CD14-positive monocyte (primary cell): ENCODE measurements at regions of chr1 and their contacts with region 1.

Region 1: DNA sequence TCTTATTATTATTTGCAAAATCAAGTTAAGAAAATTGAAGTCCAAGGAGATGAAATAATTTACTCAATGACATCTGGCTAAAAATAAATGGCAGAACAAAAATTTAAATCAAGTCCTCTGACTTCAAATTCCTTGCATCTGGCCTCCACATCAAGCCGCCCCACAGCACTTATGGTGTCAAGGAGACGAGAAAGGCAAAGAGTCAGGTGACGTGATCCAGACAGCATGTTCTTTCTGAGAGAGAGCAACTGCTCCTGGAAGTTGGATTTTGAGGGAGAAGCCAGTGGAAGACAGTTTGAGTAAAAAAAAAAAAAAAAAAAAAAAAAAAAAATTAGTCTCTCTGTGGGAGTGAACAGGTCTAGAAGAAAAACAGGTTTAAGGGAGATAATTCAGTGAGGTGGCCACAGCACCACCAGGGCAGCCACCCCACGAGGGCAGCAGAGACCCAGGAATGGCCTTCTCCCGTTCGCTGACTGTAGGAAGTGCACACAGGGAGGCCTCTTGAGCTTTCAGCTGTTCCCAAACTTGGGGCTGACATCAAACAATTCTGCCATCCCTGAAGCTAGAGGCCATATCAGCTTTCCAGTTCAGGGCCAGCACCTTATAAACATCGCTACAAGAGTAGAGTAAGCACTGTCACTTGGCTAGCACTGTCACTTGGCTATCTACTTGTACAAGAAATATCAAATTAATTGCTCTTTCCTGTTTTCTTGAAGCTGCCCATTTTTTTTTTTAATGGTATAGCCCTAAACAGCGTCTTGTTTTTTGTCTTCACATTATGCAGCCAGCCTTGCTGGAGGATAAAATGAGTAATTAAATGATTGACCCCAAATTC is 7.8 kb downstream of the C1orf162 start:
- DNase-seq: peak; percentile 71 to 85 (median 77)
- H3K4me3 ChIP-seq: no peak overlapping the region
- H3K4me3 Mint-ChIP-seq: no peak overlapping the region
- H3K27ac ChIP-seq: peak overlapping the region in 1 of 2 donors; percentile 74
- H3K27ac Mint-ChIP-seq: peak overlapping the region in 5 of 7 donors; percentile 38 to 81 (median 46)
- H3K4me1 ChIP-seq: peaks cover 61 to 63% of the 10 kb centered on the region in 2 donors
- H3K4me1 Mint-ChIP-seq: peaks cover 70% of the 10 kb centered on the region
- H3K27me3 ChIP-seq: no peaks in the 10 kb centered on the region
- H3K27me3 Mint-ChIP-seq: no peaks in the 10 kb centered on the region
- CTCF ChIP-seq: peak; percentile 81

Region 2: GRCh38 chr1:111516005-111516535 is 34.5 kb after region 1 on chr1:
- intact Hi-C with region 1: loop called (anchors 5 kb)
- DNase-seq: peak; percentile 69 to 80 (median 80)
- H3K4me3 ChIP-seq: peak overlapping the region; percentile 44 to 85 (median 66)
- H3K4me3 Mint-ChIP-seq: peak overlapping the region; percentile 81 to 95
- H3K27ac ChIP-seq: peak overlapping the region; percentile 68 to 83
- H3K27ac Mint-ChIP-seq: peak overlapping the region; percentile 72 to 92 (median 83)
- H3K4me1 ChIP-seq: peaks cover 23 to 25% of the 10 kb centered on the region in 2 donors
- H3K4me1 Mint-ChIP-seq: peaks cover 29% of the 10 kb centered on the region
- H3K27me3 ChIP-seq: no peaks in the 10 kb centered on the region
- H3K27me3 Mint-ChIP-seq: peaks cover 0 to 5% (median 1%) of the 10 kb centered on the region in 3 donors
- CTCF ChIP-seq: peak; percentile 77

Region 3: GRCh38 chr1:111656086-111657017 is 174.7 kb after region 1 on chr1:
- intact Hi-C with region 1: loop called in 1 of 2 experiments (anchors 10 kb)
- DNase-seq: peak; percentile 5 to 38 (median 37)
- H3K4me3 ChIP-seq: no peak overlapping the region
- H3K4me3 Mint-ChIP-seq: no peak overlapping the region
- H3K27ac ChIP-seq: peak overlapping the region in 1 of 2 donors; percentile 51
- H3K27ac Mint-ChIP-seq: peak overlapping the region; percentile 56 to 94 (median 79)
- H3K4me1 ChIP-seq: peaks cover 33 to 54% of the 10 kb centered on the region in 2 donors
- H3K4me1 Mint-ChIP-seq: peaks cover 40% of the 10 kb centered on the region
- H3K27me3 ChIP-seq: no peaks in the 10 kb centered on the region
- H3K27me3 Mint-ChIP-seq: no peaks in the 10 kb centered on the region
- CTCF ChIP-seq: peak; percentile 69

Region 4: DNA sequence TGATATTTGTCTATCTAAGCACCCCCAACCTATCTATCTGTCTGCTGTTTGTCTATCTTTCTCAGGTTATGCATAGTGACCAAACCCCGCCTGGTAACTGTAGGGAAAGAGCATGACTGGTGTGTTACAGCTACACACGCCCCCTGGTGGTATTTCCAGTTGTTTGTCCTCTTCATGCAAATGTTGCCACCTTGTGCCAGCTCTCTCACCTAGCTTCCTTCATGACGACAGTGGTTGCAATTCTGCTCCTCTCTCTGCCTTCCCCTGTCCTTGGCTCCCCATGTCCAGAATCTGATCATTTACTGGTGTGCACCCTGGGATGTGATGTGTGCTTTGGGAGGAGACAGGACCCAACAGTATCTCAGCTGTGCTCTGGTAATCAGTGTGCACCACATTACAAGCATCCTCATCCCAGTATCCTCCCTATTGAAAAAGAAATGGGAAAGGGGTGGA is 265.7 kb after region 1 on chr1:
- intact Hi-C with region 1: loop called in 1 of 2 experiments (anchors 10 kb)
- DNase-seq: peak; percentile 74 to 89 (median 82)
- H3K4me3 ChIP-seq: no peak overlapping the region
- H3K4me3 Mint-ChIP-seq: no peak overlapping the region
- H3K27ac ChIP-seq: no peak overlapping the region
- H3K27ac Mint-ChIP-seq: peak overlapping the region in 2 of 7 donors; percentile 28 to 79
- H3K4me1 ChIP-seq: peaks cover 7 to 9% of the 10 kb centered on the region in 2 donors
- H3K4me1 Mint-ChIP-seq: peaks cover 12% of the 10 kb centered on the region
- H3K27me3 ChIP-seq: peaks cover 8 to 13% of the 10 kb centered on the region in 2 donors
- H3K27me3 Mint-ChIP-seq: peaks cover 13 to 14% (median 14%) of the 10 kb centered on the region in 3 donors
- CTCF ChIP-seq: peak; percentile 82